PC-3 (cell line): ENCODE measurements at regions of chr5 and their contacts with region 1.

Region 1: DNA sequence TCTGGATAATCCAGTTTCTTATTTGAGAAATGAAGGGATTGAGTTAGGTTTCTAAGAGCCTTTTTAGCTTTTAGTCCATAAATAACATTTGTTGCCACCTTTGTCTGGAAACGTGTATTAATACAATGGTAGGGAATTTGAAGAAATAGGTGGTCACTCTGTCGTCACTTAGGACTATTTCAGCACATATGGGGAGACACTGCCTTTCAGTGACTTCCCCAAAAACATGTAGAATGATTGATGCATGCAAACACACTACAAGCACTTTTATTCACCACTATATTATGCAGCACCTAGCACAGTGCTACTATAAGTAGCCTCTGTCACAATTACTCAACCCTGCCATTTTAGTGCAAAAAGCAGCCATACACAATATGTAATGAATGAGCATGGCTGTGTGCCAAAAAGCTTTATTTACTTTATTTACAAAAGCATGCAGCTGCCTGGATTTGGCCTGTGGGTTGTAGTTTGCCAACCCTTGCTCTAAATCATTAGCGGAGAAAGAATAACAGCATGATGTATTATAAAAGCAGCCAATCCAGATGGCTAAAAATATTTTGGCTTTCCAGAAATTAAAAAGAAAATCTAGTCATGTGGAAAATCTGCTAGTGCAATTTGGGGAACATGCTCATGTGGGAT is 154.2 kb upstream of the HMHB1 start:
- DNase-seq: peak; percentile 72
- ATAC-seq: no peak
- H3K4me3 ChIP-seq: no peak overlapping the region
- H3K27ac ChIP-seq: no peak overlapping the region
- H3K4me1 ChIP-seq: peaks cover 39% of the 10 kb centered on the region
- H3K27me3 ChIP-seq: no peaks in the 10 kb centered on the region
- CTCF ChIP-seq: no peak

Region 2: DNA sequence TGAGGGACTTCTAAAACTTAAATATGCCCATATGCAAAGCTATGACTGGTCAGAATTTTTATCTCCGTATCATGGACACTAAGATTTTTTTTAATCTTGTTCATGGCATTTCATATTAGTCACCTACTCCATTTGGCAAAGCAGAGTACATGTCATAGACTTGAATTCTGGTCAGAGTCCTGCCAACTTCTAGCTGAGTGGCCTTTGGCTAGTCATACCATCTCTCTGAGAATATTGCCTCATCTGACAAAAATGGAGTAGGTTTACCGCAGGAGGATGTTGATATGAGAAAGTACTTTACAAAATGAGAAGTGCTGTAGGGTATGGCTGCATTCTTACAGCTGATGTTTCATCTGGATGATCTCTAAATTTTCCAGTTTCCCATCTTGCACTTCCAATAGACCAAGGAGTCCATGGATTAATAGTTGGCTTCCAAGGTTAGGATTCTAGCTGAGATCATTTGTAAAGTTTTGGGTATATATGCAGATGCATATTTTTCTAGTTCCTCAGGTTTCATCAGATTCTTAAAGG is 103.5 kb before region 1 on chr5:
- CTCF ChIA-PET with region 1: no interaction called
- POLR2A ChIA-PET with region 1: no interaction called
- intact Hi-C with region 1: loop called (anchors 5 kb)
- DNase-seq: peak; percentile 88
- ATAC-seq: peak; percentile 52
- H3K4me3 ChIP-seq: no peak overlapping the region
- H3K27ac ChIP-seq: peak overlapping the region; percentile 72
- H3K4me1 ChIP-seq: peaks cover 52% of the 10 kb centered on the region
- H3K27me3 ChIP-seq: no peaks in the 10 kb centered on the region
- CTCF ChIP-seq: no peak

Region 3: GRCh38 chr5:143559586-143560109 is 98.1 kb before region 1 on chr5:
- CTCF ChIA-PET with region 1: no interaction called
- POLR2A ChIA-PET with region 1: no interaction called
- intact Hi-C with region 1: loop called (anchors 1 kb)
- DNase-seq: no peak
- ATAC-seq: no peak
- H3K4me3 ChIP-seq: no peak overlapping the region
- H3K27ac ChIP-seq: no peak overlapping the region
- H3K4me1 ChIP-seq: peaks cover 28% of the 10 kb centered on the region
- H3K27me3 ChIP-seq: no peaks in the 10 kb centered on the region
- CTCF ChIP-seq: no peak

Region 4: GRCh38 chr5:143605403-143606005 is 52.3 kb before region 1 on chr5:
- CTCF ChIA-PET with region 1: no interaction called
- POLR2A ChIA-PET with region 1: no interaction called
- intact Hi-C with region 1: no loop called
- DNase-seq: peak; percentile 4
- ATAC-seq: no peak
- H3K4me3 ChIP-seq: no peak overlapping the region
- H3K27ac ChIP-seq: peak overlapping the region; percentile 73
- H3K4me1 ChIP-seq: peaks cover 15% of the 10 kb centered on the region; the same call in 1 of the 2 replicates
- H3K27me3 ChIP-seq: no peaks in the 10 kb centered on the region
- CTCF ChIP-seq: no peak

Region 5: GRCh38 chr5:143673676-143674447 is 16.1 kb after region 1 on chr5:
- CTCF ChIA-PET with region 1: no interaction called
- POLR2A ChIA-PET with region 1: interaction called, 3 read pairs
- intact Hi-C with region 1: loop called (anchors 2 kb)
- DNase-seq: peak; percentile 72
- ATAC-seq: peak; percentile 99
- H3K4me3 ChIP-seq: no peak overlapping the region
- H3K27ac ChIP-seq: peak overlapping the region; percentile 70
- H3K4me1 ChIP-seq: peaks cover 18% of the 10 kb centered on the region
- H3K27me3 ChIP-seq: no peaks in the 10 kb centered on the region
- CTCF ChIP-seq: no peak